MCF 10A (cell line): ENCODE measurements at regions of chr14 and their contacts with region 1.

Region 1: DNA sequence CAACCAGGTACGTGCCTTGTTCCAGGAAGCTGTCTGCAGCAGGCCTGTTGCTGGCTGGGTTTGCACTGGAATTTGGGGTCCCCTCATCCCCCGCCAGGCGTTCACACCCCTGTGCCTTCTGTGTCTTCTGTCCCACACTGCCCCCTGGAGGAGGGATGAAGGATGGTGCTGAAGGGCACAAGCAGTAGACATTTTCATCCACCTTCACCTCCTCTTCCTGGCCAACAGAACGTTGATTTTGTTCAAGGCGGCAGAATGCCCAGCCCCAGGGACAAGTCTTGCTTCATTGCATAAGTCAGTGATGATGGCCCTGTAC is 122.1 kb downstream of the CALM1 start:
- DNase-seq: peak; percentile 72
- H3K4me3 Mint-ChIP-seq: no peak overlapping the region
- H3K27ac Mint-ChIP-seq: no peak overlapping the region
- H3K4me1 Mint-ChIP-seq: peaks cover 10% of the 10 kb centered on the region
- H3K27me3 Mint-ChIP-seq: no peaks in the 10 kb centered on the region
- CTCF ChIP-seq: peak; percentile 33

Region 2: GRCh38 chr14:90301668-90302090 is 217.2 kb before region 1 on chr14:
- CTCF ChIA-PET with region 1: no interaction called
- POLR2A ChIA-PET with region 1: no interaction called
- intact Hi-C with region 1: loop called (anchors 2 kb)
- DNase-seq: peak; percentile 41
- H3K4me3 Mint-ChIP-seq: no peak overlapping the region
- H3K27ac Mint-ChIP-seq: peak overlapping the region; percentile 63
- H3K4me1 Mint-ChIP-seq: no peaks in the 10 kb centered on the region
- H3K27me3 Mint-ChIP-seq: no peaks in the 10 kb centered on the region
- CTCF ChIP-seq: peak; percentile 23

Region 3: GRCh38 chr14:90574188-90575131 is 55.6 kb after region 1 on chr14:
- CTCF ChIA-PET with region 1: no interaction called
- POLR2A ChIA-PET with region 1: no interaction called
- intact Hi-C with region 1: no loop called
- DNase-seq: no peak
- H3K4me3 Mint-ChIP-seq: no peak overlapping the region
- H3K27ac Mint-ChIP-seq: no peak overlapping the region
- H3K4me1 Mint-ChIP-seq: no peaks in the 10 kb centered on the region
- H3K27me3 Mint-ChIP-seq: no peaks in the 10 kb centered on the region
- CTCF ChIP-seq: no peak